ENCODE measurements at regions of chr3 and their contacts with region 1.

Region 1: DNA sequence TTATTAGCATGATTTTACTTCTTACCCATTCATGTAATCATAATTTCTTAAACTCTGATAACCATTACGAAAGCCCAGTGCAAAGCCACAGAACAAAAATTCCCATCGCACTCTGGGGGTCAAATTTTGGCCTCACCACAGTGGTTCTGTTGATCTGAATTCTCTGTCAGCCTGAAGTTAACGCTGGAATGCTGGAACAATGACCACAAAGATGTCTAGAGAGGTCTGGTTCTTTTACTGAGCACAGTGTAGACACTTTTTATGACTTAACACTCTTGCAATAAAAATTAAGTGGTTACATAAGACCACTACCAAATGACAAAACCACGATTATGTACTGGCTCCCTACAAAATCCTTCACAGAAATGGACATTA is 94.7 kb downstream of the PDZRN3 start:
- DNase-seq: no peak
- H3K4me3 ChIP-seq: no peak overlapping the region
- H3K27ac ChIP-seq: peak overlapping the region; percentile 35 to 48
- H3K4me1 ChIP-seq: peaks cover 0 to 58% (median 15%) of the 10 kb centered on the region in 4 donors
- H3K27me3 ChIP-seq: no peaks in the 10 kb centered on the region
- CTCF ChIP-seq: no peak

Region 2: DNA sequence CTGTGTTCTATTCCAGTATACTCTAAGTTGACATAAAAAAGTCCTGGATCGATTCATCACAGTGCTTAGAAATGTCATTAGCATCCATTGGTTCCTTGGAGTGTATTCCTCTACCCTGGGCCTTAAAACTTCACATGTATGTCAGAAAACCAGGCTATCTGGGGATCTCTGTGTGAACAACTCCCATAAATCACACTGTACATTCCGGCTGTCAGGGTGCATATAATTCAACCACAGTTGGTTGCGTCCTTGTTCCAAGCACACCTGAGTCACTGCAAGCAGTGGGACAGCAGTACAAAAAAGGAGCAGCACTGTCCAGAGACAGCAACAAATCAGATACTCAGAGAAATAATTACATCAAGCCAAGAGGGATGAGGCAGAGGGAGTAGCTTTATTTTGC is 42.4 kb after region 1 on chr3:
- intact Hi-C with region 1: loop called (anchors 2 kb)
- DNase-seq: no peak
- H3K4me3 ChIP-seq: no peak overlapping the region
- H3K27ac ChIP-seq: no peak overlapping the region
- H3K4me1 ChIP-seq: peaks cover 0 to 82% (median 14%) of the 10 kb centered on the region in 4 donors
- H3K27me3 ChIP-seq: no peaks in the 10 kb centered on the region
- CTCF ChIP-seq: no peak

Region 3: GRCh38 chr3:73739791-73740453 is 209.9 kb after region 1 on chr3:
- intact Hi-C with region 1: no loop called
- DNase-seq: no peak
- H3K4me3 ChIP-seq: no peak overlapping the region
- H3K27ac ChIP-seq: no peak overlapping the region
- H3K4me1 ChIP-seq: peaks cover 0 to 29% (median 8%) of the 10 kb centered on the region in 4 donors
- H3K27me3 ChIP-seq: no peaks in the 10 kb centered on the region
- CTCF ChIP-seq: no peak